ENCODE measurements at regions of chr16 and their contacts with region 1.

Region 1: GRCh38 chr16:1772736-1773584 is at the starts of genes EME2 and MRPS34:
- DNase-seq: peak; percentile 55 to 87 (median 74)
- ATAC-seq: peak; percentile 54 to 62
- H3K4me3 Mint-ChIP-seq: peak within 1 kb of the TSS; percentile 90 to 99 (median 96)
- H3K27ac Mint-ChIP-seq: peak within 1 kb of the TSS; percentile 88 to 97 (median 95)
- H3K4me1 Mint-ChIP-seq: peaks cover 10 to 26% (median 19%) of the 10 kb centered on the region in 4 donors
- H3K27me3 Mint-ChIP-seq: no peaks in the 10 kb centered on the region
- polyA plus RNA-seq, gene EME2: 0.35 to 1.6 (median 1.1) TPM
- polyA plus RNA-seq, gene MRPS34: 113 to 145 (median 133) TPM

Region 2: GRCh38 chr16:1816396-1817275 is 43.7 kb after region 1 on chr16:
- POLR2A ChIA-PET with region 1: no interaction called
- DNase-seq: no peak
- ATAC-seq: no peak
- H3K4me3 Mint-ChIP-seq: no peak overlapping the region
- H3K27ac Mint-ChIP-seq: no peak overlapping the region
- H3K4me1 Mint-ChIP-seq: peaks cover 8 to 17% (median 9%) of the 10 kb centered on the region in 4 donors
- H3K27me3 Mint-ChIP-seq: no peaks in the 10 kb centered on the region

Region 3: DNA sequence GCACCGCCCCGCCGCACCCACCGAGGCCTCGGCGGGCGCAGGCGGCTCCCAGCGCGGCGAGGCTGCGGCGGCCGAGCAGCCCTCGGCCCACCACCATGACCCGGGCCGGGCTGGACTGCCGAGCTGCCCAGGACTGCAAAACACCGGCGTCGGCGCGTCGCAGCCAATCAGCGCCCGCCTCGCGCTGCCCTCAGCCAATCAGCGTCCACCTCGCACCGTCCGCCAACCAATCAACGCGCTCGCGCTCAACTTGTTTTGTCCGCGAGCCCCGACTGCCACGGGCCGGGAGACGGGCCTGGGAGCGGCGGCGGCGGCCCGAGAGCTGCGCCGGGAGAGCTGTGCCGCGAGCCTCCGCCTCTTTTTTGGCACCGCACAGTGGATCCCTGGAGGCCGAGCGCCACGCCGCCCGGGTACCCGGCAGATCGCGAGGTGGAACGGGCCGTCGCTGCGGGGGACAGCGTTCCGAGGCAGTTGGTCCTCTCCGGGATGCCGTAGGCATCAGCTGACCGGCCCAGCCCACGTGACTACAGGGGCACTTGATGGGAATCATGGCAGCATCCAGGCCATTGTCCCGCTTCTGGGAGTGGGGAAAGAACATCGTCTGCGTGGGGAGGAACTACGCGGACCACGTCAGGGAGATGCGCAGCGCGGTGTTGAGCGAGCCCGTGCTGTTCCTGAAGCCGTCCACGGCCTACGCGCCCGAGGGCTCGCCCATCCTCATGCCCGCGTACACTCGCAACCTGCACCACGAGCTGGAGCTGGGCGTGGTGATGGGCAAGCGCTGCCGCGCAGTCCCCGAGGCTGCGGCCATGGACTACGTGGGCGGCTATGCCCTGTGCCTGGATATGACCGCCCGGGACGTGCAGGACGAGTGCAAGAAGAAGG is 54.0 kb after region 1 on chr16 and contains the starts of genes FAHD1 and HAGH:
- POLR2A ChIA-PET with region 1: interaction called, 14 read pairs
- DNase-seq: peak; percentile 82 to 99 (median 90)
- ATAC-seq: peak; percentile 84 to 87
- H3K4me3 Mint-ChIP-seq: peak within 1 kb of the TSS; percentile 86 to 96 (median 92)
- H3K27ac Mint-ChIP-seq: peak within 1 kb of the TSS; percentile 87 to 97 (median 94)
- H3K4me1 Mint-ChIP-seq: peaks cover 17 to 59% (median 45%) of the 10 kb centered on the region in 4 donors
- H3K27me3 Mint-ChIP-seq: peaks cover 0 to 3% (median 0%) of the 10 kb centered on the region in 5 donors
- polyA plus RNA-seq, gene FAHD1: 20.3 to 34.2 (median 32.6) TPM
- polyA plus RNA-seq, gene HAGH: 38.7 to 60.0 (median 45.0) TPM

Region 4: DNA sequence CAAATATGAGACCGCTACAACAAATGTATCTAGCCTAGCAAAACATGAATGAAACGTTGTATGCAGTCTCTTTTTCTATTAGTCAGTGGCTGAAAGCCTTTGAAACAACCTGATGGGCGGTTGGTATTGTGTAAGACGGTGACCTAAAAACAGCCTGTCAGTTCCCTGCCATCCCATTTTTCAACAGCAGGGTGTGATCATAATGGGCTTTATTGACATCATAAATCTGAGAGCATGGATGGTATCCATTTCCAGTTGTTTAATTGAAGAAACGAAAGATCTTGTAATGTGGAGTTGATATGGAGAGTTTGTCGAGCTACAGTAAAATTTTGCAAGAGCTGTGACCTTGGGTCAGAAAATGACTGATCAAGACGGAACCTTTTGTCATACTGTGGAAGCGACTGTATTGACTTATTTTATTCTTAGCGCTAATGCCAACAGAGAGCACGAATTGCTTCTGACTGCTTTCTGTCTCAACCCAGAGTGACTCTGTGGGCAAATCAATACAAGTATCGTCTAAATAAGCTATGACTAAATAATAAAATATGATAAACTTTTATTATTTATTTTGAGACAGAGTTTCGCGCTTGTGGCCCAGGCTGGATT is 111.3 kb after region 1 on chr16:
- POLR2A ChIA-PET with region 1: no interaction called
- DNase-seq: no peak
- ATAC-seq: no peak
- H3K4me3 Mint-ChIP-seq: no peak overlapping the region
- H3K27ac Mint-ChIP-seq: no peak overlapping the region
- H3K4me1 Mint-ChIP-seq: no peaks in the 10 kb centered on the region
- H3K27me3 Mint-ChIP-seq: peaks cover 0 to 14% (median 5%) of the 10 kb centered on the region in 5 donors